Calu3 (cell line): ENCODE measurements at regions of chr2 and their contacts with region 1.

Region 1: GRCh38 chr2:217491271-217491670 is 511.5 kb downstream of the TNS1 start:
- DNase-seq: no peak
- H3K4me3 Mint-ChIP-seq: no peak overlapping the region
- H3K27ac Mint-ChIP-seq: no peak overlapping the region
- H3K4me1 Mint-ChIP-seq: no peaks in the 10 kb centered on the region
- H3K27me3 Mint-ChIP-seq: no peaks in the 10 kb centered on the region
- CTCF ChIP-seq: no peak

Region 2: DNA sequence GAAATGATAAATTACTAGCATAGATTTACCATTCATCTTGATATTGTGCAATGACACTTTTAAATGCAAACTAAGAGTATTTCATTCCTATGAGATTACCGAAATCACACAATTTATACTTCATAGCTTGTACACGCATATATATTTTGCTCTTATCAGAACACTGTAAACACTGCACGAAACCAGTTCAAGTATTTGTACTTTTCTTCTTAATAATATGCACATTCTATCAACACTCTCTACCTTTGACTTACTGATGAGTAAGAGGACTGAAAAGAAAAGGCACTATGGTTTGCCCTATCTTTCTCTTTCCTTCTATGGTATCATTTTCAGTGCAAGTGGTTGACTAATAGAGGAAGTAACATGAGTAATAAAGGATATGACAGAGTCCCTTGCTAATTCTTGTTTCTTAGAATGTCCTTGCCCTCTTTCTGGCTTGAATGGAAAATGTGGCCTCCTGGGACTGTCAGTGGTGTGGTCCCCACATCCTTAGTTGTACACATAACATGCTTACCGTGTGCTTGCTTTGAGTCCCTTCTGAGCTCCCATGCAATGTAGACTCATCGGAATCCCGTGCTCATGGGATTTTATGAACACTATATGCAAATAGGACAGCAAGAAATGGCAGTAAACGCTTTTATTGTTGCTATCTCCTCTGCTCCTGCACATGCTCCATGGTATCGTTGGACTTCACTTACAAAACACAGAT is 267.9 kb before region 1 on chr2:
- CTCF ChIA-PET with region 1: no interaction called
- intact Hi-C with region 1: no loop called
- DNase-seq: peak; percentile 56
- H3K4me3 Mint-ChIP-seq: no peak overlapping the region
- H3K27ac Mint-ChIP-seq: peak overlapping the region; percentile 86
- H3K4me1 Mint-ChIP-seq: peaks cover 42% of the 10 kb centered on the region
- H3K27me3 Mint-ChIP-seq: no peaks in the 10 kb centered on the region
- CTCF ChIP-seq: no peak

Region 3: GRCh38 chr2:217338306-217338916 is 152.9 kb before region 1 on chr2:
- CTCF ChIA-PET with region 1: no interaction called
- intact Hi-C with region 1: loop called (anchors 5 kb)
- DNase-seq: no peak
- H3K4me3 Mint-ChIP-seq: no peak overlapping the region
- H3K27ac Mint-ChIP-seq: peak overlapping the region; percentile 60
- H3K4me1 Mint-ChIP-seq: peaks cover 64% of the 10 kb centered on the region
- H3K27me3 Mint-ChIP-seq: no peaks in the 10 kb centered on the region
- CTCF ChIP-seq: no peak